Dendritic cell treated with granulocyte-macrophage colony-stimulating factor and Interleukin-4, amounts not matched to agents 40 ng/mL and 50 ng/mL, for 4 days (primary cell): ENCODE measurements at regions of chr2 and their contacts with region 1.

Region 1: GRCh38 chr2:173210270-173211196 is 134.9 kb downstream of the MAP3K20 start:
- H3K4me3 Mint-ChIP-seq: no peak overlapping the region
- H3K27ac Mint-ChIP-seq: peak overlapping the region; percentile 65
- H3K4me1 Mint-ChIP-seq: peaks cover 9% of the 10 kb centered on the region
- H3K27me3 Mint-ChIP-seq: no peaks in the 10 kb centered on the region

Region 2: GRCh38 chr2:173027181-173028128 is 183.1 kb before region 1 on chr2:
- intact Hi-C with region 1: loop called (anchors 1 kb)
- H3K4me3 Mint-ChIP-seq: no peak overlapping the region
- H3K27ac Mint-ChIP-seq: no peak overlapping the region
- H3K4me1 Mint-ChIP-seq: no peaks in the 10 kb centered on the region
- H3K27me3 Mint-ChIP-seq: peaks cover 5% of the 10 kb centered on the region